A673 (cell line): ENCODE measurements at regions of chr3 and their contacts with region 1.

Region 1: DNA sequence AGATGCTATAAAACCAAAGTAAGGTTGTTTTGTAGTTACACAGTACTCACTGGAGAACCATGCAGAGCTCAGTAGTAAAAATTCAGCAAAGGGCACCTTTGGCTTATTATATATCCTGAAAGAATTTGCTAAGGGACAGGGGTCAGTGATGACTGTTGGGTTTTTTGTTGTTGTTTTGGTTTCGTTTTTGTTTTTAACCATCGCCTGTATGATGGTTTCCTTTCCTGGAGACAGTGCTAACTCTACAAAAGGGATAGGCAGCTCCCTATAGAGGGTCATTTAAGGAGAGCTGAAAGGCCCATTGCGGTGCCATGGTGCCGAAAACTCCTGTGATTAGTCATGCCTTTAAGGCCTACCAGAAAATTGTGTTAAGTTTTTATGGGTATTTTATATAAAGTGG is 118.2 kb upstream of the GOLIM4 start:
- DNase-seq: no peak
- H3K4me3 ChIP-seq: no peak overlapping the region
- H3K27ac ChIP-seq: no peak overlapping the region
- H3K4me1 ChIP-seq: no peaks in the 10 kb centered on the region
- H3K27me3 ChIP-seq: peaks cover 20% of the 10 kb centered on the region
- CTCF ChIP-seq: no peak

Region 2: DNA sequence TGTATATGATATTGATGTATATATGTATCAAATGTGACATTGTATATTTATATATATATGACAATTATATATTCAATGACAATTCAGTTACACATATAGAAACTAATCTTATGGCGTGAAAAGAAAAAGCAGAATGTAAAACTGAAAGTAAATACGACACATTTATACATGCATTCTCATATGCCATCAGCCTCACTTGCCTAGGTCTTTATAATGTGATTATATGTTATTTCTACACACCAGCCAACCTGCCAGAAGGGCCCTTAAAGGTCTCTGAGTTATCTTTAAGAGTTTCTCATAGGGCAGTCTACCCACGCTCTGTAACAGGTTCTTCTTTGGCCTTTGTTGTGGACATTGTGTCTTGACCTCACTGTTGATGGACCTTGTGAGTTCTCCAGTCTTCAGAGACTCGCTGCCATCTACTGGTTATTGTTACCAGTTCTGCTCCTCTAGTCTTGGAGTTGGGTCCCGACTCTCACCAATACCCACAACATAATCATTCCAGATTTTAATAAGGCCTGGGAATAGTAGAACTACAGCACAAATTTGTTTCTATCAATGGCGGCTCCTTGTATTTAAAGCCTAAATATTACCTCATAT is 253.3 kb after region 1 on chr3:
- CTCF ChIA-PET with region 1: no interaction called
- POLR2A ChIA-PET with region 1: no interaction called
- intact Hi-C with region 1: loop called (anchors 2 kb)
- DNase-seq: no peak
- H3K4me3 ChIP-seq: no peak overlapping the region
- H3K27ac ChIP-seq: no peak overlapping the region
- H3K4me1 ChIP-seq: no peaks in the 10 kb centered on the region
- H3K27me3 ChIP-seq: peaks cover 19% of the 10 kb centered on the region
- CTCF ChIP-seq: no peak

Region 3: GRCh38 chr3:168620826-168621225 is 406.9 kb after region 1 on chr3:
- CTCF ChIA-PET with region 1: interaction called, 9 read pairs
- POLR2A ChIA-PET with region 1: no interaction called
- intact Hi-C with region 1: loop called (anchors 2 kb)
- DNase-seq: peak; percentile 45
- H3K4me3 ChIP-seq: no peak overlapping the region
- H3K27ac ChIP-seq: no peak overlapping the region
- H3K4me1 ChIP-seq: no peaks in the 10 kb centered on the region
- H3K27me3 ChIP-seq: peaks cover 31% of the 10 kb centered on the region
- CTCF ChIP-seq: peak; percentile 60

Region 4: GRCh38 chr3:168847291-168847883 is 633.5 kb after region 1 on chr3:
- CTCF ChIA-PET with region 1: interaction called, 22 read pairs
- POLR2A ChIA-PET with region 1: no interaction called
- intact Hi-C with region 1: loop called (anchors 1 kb)
- DNase-seq: peak; percentile 53
- H3K4me3 ChIP-seq: no peak overlapping the region
- H3K27ac ChIP-seq: no peak overlapping the region
- H3K4me1 ChIP-seq: no peaks in the 10 kb centered on the region
- H3K27me3 ChIP-seq: peaks cover 48% of the 10 kb centered on the region
- CTCF ChIP-seq: peak; percentile 68

Region 5: DNA sequence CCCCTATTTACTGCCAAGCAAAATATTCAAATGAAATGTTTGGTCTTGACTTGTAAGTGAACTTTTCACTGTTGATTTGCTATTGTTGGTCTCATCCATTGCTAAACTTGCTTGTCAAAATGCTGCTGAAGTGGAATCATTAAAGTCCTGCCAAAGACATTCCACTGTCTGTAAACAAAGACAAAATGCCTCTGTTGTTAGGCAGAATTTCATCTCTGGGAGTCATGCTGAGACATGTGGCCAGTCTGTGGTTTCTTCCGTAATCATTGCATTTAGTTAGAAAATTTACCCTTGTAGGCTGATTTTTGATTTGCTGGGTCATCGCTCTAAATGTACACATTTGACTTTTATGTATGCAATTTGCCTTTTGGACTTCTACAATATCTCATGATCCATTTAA is 871.9 kb after region 1 on chr3:
- CTCF ChIA-PET with region 1: no interaction called
- POLR2A ChIA-PET with region 1: no interaction called
- intact Hi-C with region 1: no loop called
- DNase-seq: no peak
- H3K4me3 ChIP-seq: no peak overlapping the region
- H3K27ac ChIP-seq: no peak overlapping the region
- H3K4me1 ChIP-seq: no peaks in the 10 kb centered on the region
- H3K27me3 ChIP-seq: peaks cover 65% of the 10 kb centered on the region
- CTCF ChIP-seq: no peak

Region 6: GRCh38 chr3:169103951-169104941 is 890.3 kb after region 1 on chr3:
- CTCF ChIA-PET with region 1: interaction called, 10 read pairs
- POLR2A ChIA-PET with region 1: no interaction called
- intact Hi-C with region 1: no loop called
- DNase-seq: no peak
- H3K4me3 ChIP-seq: no peak overlapping the region
- H3K27ac ChIP-seq: no peak overlapping the region
- H3K4me1 ChIP-seq: no peaks in the 10 kb centered on the region
- H3K27me3 ChIP-seq: peaks cover 79% of the 10 kb centered on the region
- CTCF ChIP-seq: no peak